HEK293 (cell line): ENCODE measurements at regions of chr18 and their contacts with region 1.

Region 1: DNA sequence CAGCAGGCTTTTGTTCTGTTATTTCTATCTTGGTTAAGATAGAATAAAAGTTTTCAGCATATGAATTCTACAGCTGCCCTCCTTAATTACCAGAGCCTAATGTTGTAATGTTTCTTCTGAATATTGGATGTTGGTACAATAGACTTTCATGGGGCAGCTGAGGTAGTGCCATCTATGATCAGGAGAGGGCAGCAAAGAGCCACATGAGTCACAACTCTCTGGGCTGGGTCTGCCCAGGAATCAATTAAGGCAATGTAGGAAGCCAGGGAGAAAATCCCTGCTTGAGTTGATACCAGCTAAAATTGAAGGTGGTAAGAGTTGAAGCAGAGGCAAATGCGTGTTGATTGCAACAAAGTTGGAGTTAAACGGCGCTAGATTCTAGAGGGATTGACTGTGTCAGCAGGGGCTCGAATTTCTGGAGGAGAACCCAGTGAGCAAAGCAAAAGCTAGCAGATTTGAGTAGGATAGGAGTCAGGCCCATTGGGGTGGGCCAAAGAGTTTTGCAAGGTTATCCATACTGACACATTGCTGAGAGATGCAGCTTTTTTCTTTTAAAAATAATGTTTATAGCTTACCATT is 10.6 kb upstream of the MC5R start:
- H3K4me3 ChIP-seq: no peak overlapping the region
- H3K27ac ChIP-seq: no peak overlapping the region
- H3K4me1 ChIP-seq: no peaks in the 10 kb centered on the region
- CTCF ChIP-seq: peak; percentile 68; the same call in 1 of the 2 replicates

Region 2: DNA sequence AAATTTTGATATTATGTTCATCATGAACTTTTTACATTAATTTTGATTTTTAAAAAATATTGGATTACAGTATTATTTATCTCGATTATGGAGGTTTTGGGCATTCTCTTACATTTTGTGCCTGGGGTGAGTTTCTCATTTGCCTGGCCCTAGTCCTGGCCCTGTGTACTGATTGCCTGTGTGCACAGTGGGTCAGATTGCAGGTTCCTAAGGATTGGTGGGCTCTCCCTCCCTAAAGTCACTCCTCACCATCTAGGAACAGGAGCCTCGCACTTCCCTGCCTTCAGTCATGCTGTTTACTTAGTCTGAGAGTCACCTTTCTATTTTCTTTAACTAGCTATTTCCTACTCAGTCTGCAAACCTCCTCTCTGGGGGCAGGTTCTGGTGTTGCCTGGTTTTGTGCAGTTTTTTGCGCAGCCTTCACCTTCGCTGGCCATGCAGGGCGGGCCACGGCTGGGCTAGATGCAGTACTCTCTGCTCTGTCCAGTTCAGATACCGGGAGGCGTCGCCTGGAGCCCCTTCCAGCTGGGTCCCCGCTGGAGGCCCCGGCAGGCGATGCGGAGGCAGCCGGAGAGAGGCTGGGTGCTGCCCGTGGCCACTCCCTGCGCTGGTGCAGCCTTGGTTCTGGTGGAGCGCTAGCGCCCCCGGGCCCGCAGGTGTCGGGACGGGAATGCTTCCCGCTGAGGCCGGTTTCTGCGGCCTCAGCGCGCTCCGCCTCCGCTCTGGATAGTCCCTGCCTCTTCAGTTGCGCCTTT is 12.7 kb before region 1 on chr18:
- CTCF ChIA-PET with region 1: interaction called, 38 read pairs
- POLR2A ChIA-PET with region 1: no interaction called
- H3K4me3 ChIP-seq: peak overlapping the region; percentile 2
- H3K27ac ChIP-seq: no peak overlapping the region
- H3K4me1 ChIP-seq: peaks cover 3% of the 10 kb centered on the region; the same call in 1 of the 2 replicates
- CTCF ChIP-seq: peak; percentile 91

Region 3: DNA sequence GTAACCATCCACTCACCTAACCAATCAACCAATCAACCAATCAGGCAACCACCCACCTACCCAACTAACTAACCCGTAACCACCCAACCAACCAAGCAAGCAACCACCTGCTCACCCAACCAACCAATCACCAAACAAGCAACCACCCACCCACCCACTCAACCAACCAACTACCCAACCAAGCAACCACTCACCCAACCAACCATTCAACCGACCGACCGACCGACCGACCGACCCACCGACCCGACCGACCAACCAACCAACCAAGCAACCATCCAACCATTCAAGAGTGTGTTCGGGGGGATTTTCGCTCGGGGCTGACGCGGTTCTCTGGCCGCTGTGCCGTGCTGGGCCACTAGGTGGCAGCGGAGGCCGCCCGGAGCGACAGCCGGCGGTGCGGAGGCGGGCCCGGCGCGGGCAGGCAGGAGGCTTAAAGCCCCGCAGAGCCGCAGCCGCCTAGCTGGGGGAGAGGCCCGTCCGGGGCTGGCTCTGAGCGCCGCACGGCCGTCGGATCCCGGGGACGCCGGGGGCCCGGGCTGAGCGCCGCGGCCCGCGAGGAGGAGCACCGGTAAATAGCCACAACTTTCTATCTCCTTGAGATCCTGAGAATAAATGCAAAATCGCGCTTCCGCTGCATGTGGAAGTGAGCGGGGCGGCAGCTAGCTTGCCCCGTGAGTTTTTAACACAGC is 10.5 kb after region 1 on chr18 and contains the start of gene MC5R:
- CTCF ChIA-PET with region 1: interaction called, 17 read pairs
- POLR2A ChIA-PET with region 1: no interaction called
- H3K4me3 ChIP-seq: peak within 1 kb of the TSS; percentile 11
- H3K27ac ChIP-seq: no peak within 1 kb of the TSS
- H3K4me1 ChIP-seq: no peaks in the 10 kb centered on the region
- CTCF ChIP-seq: peak; percentile 92

Region 4: GRCh38 chr18:13831864-13832508 is 18.6 kb after region 1 on chr18:
- CTCF ChIA-PET with region 1: interaction called, 20 read pairs
- POLR2A ChIA-PET with region 1: no interaction called
- H3K4me3 ChIP-seq: no peak overlapping the region
- H3K27ac ChIP-seq: no peak overlapping the region
- H3K4me1 ChIP-seq: no peaks in the 10 kb centered on the region
- CTCF ChIP-seq: no peak